ENCODE measurements at regions of chr12 and their contacts with region 1.

Region 1: DNA sequence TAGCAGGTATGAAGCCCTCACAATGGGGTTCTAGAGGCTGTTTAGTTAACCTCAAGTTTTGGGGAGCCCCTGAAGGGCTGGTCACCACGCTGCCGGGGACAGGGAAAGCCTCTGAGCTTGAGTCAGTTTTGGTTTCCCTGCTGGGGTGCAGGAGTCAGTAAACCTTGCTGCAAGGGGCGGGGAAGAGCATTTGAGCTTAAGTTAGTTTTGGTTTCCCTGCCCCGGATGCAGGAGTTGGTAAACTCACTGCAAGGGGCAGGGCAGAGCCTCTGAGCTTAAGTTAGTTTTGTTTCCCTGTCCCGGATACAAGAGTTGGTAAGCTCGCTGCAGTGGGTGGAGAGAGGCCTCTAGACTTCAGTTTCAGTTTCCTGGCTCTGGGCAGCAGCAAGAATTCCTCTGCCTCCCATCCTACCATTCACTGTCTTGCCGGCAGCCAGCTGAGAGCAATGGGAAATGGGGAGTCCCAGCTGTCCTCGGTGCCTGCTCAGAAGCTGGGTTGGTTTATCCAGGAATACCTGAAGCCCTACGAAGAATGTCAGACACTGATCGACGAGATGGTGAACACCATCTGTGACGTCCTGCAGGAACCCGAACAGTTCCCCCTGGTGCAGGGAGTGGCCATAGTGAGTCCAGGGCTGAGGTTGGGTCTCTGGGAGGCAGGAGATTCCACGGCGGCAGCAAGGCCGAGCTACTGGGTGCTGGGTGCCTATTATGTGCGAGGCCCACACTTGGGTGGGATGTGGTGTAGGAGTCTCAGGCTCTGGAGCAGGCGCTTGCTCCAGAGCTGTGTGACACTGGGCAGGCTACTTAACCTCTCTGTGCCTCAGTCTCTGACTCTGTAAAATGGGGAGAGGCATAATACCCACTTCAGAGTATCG is at the start of gene OAS2:
- DNase-seq: peak; percentile 90
- ATAC-seq: peak; percentile 93
- H3K4me3 Mint-ChIP-seq: peak within 1 kb of the TSS; percentile 100
- H3K27ac Mint-ChIP-seq: peak within 1 kb of the TSS; percentile 100
- H3K4me1 Mint-ChIP-seq: peaks cover 44% of the 10 kb centered on the region
- H3K27me3 Mint-ChIP-seq: no peaks in the 10 kb centered on the region
- total RNA-seq, gene OAS2: 148 to 278 TPM

Region 2: GRCh38 chr12:112418608-112419298 is 559.6 kb before region 1 on chr12 and contains the start of gene PTPN11:
- CTCF ChIA-PET with region 1: no interaction called
- POLR2A ChIA-PET with region 1: no interaction called
- intact Hi-C with region 1: loop called in 1 of 2 experiments (anchors 2 kb)
- DNase-seq: peak; percentile 95
- ATAC-seq: peak; percentile 78
- H3K4me3 Mint-ChIP-seq: peak within 1 kb of the TSS; percentile 97
- H3K27ac Mint-ChIP-seq: peak within 1 kb of the TSS; percentile 97
- H3K4me1 Mint-ChIP-seq: peaks cover 40% of the 10 kb centered on the region
- H3K27me3 Mint-ChIP-seq: no peaks in the 10 kb centered on the region
- total RNA-seq, gene PTPN11: 129 to 134 TPM

Region 3: DNA sequence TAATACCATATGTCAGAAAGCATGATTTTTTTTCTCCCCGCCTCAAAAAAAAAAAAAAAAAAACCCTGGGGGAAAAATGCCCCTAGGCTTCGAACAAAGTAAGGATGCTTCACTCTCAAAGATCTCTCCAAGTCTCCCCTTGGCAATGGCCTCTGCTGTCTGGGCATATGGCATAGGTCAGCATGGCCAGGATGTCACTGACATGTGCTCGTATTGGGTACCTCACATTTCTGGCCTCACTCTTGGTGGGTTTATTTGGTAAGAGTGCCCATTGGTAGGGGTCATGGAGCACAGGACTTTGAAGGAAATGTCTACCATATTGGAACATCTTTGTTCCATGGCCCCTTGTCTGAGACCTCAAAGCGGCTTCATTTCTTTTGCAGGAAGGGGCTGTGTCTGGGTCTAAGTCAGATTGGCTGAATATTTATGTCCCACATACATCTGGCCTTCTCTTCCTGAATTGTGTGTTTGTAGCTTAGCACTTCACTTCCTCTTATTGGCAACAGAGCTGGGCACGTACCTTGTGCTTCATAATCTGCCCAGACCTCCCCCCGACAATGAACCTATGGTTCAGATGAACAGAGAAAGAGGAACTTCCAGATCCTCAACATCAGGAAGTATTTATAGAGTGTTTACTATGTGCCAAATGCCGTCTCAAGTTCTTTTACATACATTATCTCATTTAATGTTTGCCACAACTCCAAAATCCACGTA is 108.0 kb before region 1 on chr12:
- CTCF ChIA-PET with region 1: no interaction called
- POLR2A ChIA-PET with region 1: no interaction called
- intact Hi-C with region 1: no loop called
- DNase-seq: no peak
- ATAC-seq: no peak
- H3K4me3 Mint-ChIP-seq: no peak overlapping the region
- H3K27ac Mint-ChIP-seq: no peak overlapping the region
- H3K4me1 Mint-ChIP-seq: no peaks in the 10 kb centered on the region
- H3K27me3 Mint-ChIP-seq: peaks cover 28% of the 10 kb centered on the region

Region 4: DNA sequence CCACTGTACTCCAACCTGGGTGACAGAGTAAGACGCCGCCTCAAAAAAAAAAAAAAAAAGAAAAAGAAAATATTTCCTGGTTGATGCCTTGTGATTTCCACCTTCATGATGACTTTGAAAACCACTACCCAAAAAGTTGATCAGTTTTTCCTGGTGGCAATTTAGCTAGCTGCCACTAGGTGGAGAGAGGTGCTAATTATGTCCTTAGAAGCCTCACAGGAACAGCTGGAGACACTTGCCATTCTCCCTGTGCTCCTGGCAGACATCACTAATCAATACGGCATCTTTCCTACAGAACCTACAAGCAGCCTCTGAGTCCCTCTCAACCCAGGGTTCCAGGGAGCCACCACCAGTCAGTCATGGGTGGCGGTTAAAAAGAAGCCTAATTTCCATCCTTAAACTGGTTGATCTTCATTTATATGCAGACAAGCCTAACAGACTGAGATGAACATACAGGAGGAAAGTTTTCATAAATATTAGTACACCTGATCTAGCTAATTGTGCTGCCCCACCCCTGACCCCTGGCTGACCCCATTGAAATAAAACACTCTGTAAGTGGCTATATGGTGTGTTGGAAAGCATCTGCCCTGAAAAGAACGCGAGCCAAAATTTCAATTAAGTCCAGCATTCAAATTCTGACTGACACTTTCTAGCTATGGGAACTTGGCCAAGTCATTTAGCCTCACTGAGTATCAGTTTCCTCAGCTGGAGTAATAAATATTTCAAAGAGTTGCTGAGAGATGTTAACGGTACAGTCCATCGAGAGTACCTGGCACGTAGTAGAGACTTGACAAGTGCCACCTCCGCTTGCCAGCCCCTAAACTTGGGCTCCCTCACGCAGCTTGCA is 77.9 kb before region 1 on chr12:
- CTCF ChIA-PET with region 1: interaction called, 11 read pairs
- POLR2A ChIA-PET with region 1: interaction called, 9 read pairs
- intact Hi-C with region 1: loop called in 1 of 2 experiments (anchors 1 kb)
- DNase-seq: peak; percentile 62
- ATAC-seq: peak; percentile 76
- H3K4me3 Mint-ChIP-seq: no peak overlapping the region
- H3K27ac Mint-ChIP-seq: no peak overlapping the region
- H3K4me1 Mint-ChIP-seq: peaks cover 19% of the 10 kb centered on the region
- H3K27me3 Mint-ChIP-seq: no peaks in the 10 kb centered on the region

Region 5: GRCh38 chr12:112906712-112907414 is 71.5 kb before region 1 on chr12 and contains the start of gene OAS1:
- CTCF ChIA-PET with region 1: interaction called, 11 read pairs
- POLR2A ChIA-PET with region 1: interaction called, 11 read pairs
- intact Hi-C with region 1: loop called (anchors 1 to 2 kb)
- DNase-seq: peak; percentile 55
- ATAC-seq: peak; percentile 85
- H3K4me3 Mint-ChIP-seq: peak within 1 kb of the TSS; percentile 85
- H3K27ac Mint-ChIP-seq: peak within 1 kb of the TSS; percentile 95
- H3K4me1 Mint-ChIP-seq: peaks cover 56% of the 10 kb centered on the region
- H3K27me3 Mint-ChIP-seq: no peaks in the 10 kb centered on the region
- total RNA-seq, gene OAS1: 50.5 to 52.8 TPM

Region 6: DNA sequence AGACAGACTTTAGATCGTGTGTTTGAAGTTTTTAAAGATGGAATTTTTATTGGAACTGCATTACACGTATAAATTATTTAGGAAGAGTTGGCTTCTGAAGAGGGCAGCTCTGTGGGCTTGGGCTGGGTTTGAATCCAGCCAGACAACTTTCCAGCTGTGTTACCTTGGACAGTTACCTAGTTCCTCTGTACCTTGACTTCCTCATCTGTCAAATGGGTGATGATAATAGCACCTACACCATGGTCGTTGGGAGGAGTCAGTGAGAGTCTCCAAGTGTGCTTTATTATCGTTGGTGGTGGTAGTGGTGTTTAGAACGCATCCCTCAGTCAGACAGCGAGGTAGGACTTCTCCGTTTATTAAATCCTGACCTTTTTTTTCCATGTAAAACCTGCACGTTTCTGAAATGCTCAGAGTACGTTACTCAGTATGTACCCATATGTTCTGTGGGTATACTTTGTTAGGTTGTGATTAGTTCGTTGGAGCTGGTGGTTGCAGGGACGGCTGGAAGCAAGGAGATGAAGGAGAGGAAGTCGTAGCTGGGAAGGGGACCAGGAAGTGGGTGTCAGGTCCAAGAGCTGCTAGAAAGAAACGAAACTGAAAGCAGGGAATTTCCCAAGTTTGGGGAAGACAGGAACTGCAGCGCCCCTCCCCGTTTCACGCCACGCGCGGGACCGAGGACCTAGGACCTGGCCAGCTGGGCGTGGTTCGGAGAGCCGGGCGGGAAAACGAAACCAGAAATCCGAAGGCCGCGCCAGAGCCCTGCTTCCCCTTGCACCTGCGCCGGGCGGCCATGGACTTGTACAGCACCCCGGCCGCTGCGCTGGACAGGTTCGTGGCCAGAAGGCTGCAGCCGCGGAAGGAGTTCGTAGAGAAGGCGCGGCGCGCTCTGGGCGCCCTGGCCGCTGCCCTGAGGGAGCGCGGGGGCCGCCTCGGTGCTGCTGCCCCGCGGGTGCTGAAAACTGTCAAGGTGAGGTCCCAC is 40.4 kb before region 1 on chr12 and contains the start of gene OAS3:
- CTCF ChIA-PET with region 1: interaction called, 4 read pairs
- POLR2A ChIA-PET with region 1: interaction called, 3 read pairs
- intact Hi-C with region 1: loop called (anchors 1 kb)
- DNase-seq: peak; percentile 76
- ATAC-seq: peak; percentile 61
- H3K4me3 Mint-ChIP-seq: peak within 1 kb of the TSS; percentile 78
- H3K27ac Mint-ChIP-seq: peak within 1 kb of the TSS; percentile 89
- H3K4me1 Mint-ChIP-seq: peaks cover 37% of the 10 kb centered on the region
- H3K27me3 Mint-ChIP-seq: no peaks in the 10 kb centered on the region
- total RNA-seq, gene OAS3: 32.1 to 35.3 TPM

Region 7: DNA sequence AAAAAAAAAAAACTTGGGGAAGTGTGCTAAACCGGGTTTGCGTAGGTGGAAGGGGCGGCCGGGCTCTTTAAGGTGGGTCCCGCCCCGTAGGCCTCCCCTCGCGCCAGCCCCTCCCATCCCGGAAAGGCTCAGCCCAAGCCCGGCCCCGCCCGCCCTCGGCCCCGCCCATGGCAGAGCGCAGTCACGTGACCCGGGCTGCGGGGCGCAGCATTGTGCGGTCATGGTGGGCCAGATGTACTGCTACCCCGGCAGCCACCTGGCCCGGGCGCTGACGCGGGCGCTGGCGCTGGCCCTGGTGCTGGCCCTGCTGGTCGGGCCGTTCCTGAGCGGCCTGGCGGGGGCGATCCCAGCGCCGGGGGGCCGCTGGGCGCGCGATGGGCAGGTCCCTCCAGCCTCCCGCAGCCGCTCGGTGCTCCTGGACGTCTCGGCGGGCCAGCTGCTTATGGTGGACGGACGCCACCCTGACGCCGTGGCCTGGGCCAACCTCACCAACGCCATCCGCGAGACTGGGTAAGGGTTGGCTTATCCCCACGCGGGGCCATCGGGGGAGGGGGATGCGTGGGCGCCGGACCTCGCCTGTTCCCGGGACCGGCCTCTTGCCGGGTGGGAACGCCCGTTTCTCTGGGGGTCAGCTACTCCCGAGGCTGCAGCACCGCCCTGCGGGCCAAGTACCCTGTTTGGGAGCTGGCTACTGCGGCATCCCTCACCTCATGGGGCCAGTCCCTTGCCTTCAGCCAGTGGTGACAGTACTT is 380.2 kb after region 1 on chr12 and contains the start of gene PLBD2:
- CTCF ChIA-PET with region 1: no interaction called
- POLR2A ChIA-PET with region 1: no interaction called
- intact Hi-C with region 1: loop called in 1 of 2 experiments (anchors 1 kb)
- DNase-seq: peak; percentile 98
- ATAC-seq: peak; percentile 98
- H3K4me3 Mint-ChIP-seq: peak within 1 kb of the TSS; percentile 84
- H3K27ac Mint-ChIP-seq: peak within 1 kb of the TSS; percentile 86
- H3K4me1 Mint-ChIP-seq: peaks cover 22% of the 10 kb centered on the region
- H3K27me3 Mint-ChIP-seq: no peaks in the 10 kb centered on the region
- total RNA-seq, gene PLBD2: 13.7 to 17.3 TPM